Activated CD8-positive, alpha-beta memory T cell treated with anti-CD3 and anti-CD28 coated beads, Interleukin-2, amount 10 ng/mL, durations not matched to agents 7 days and 5 days (primary cell): ENCODE measurements at regions of chr2 and their contacts with region 1.

Region 1: GRCh38 chr2:45778720-45779171 is 127.3 kb downstream of the PRKCE start:
- DNase-seq: peak; percentile 74
- ATAC-seq: peak; percentile 86
- H3K4me3 Mint-ChIP-seq: no peak overlapping the region
- H3K27ac Mint-ChIP-seq: no peak overlapping the region
- H3K4me1 Mint-ChIP-seq: peaks cover 14% of the 10 kb centered on the region
- H3K27me3 Mint-ChIP-seq: no peaks in the 10 kb centered on the region

Region 2: GRCh38 chr2:45643543-45644542 is 134.9 kb before region 1 on chr2:
- CTCF ChIA-PET with region 1: interaction called, 59 read pairs
- DNase-seq: peak; percentile 73
- ATAC-seq: peak; percentile 99
- H3K4me3 Mint-ChIP-seq: peak overlapping the region; percentile 52
- H3K27ac Mint-ChIP-seq: no peak overlapping the region
- H3K4me1 Mint-ChIP-seq: peaks cover 18% of the 10 kb centered on the region
- H3K27me3 Mint-ChIP-seq: peaks cover 32% of the 10 kb centered on the region

Region 3: GRCh38 chr2:45650851-45651414 is 127.8 kb before region 1 on chr2:
- CTCF ChIA-PET with region 1: interaction called, 52 read pairs
- DNase-seq: peak; percentile 94
- ATAC-seq: peak; percentile 88
- H3K4me3 Mint-ChIP-seq: peak overlapping the region; percentile 90
- H3K27ac Mint-ChIP-seq: peak overlapping the region; percentile 94
- H3K4me1 Mint-ChIP-seq: peaks cover 31% of the 10 kb centered on the region
- H3K27me3 Mint-ChIP-seq: peaks cover 13% of the 10 kb centered on the region

Region 4: GRCh38 chr2:45789961-45790723 is 11.4 kb after region 1 on chr2:
- CTCF ChIA-PET with region 1: interaction called, 31 read pairs
- DNase-seq: no peak
- ATAC-seq: no peak
- H3K4me3 Mint-ChIP-seq: no peak overlapping the region
- H3K27ac Mint-ChIP-seq: no peak overlapping the region
- H3K4me1 Mint-ChIP-seq: peaks cover 3% of the 10 kb centered on the region
- H3K27me3 Mint-ChIP-seq: no peaks in the 10 kb centered on the region

Region 5: GRCh38 chr2:45843136-45843535 is 64.4 kb after region 1 on chr2:
- CTCF ChIA-PET with region 1: interaction called, 14 read pairs
- DNase-seq: peak; percentile 62
- ATAC-seq: peak; percentile 37
- H3K4me3 Mint-ChIP-seq: peak overlapping the region; percentile 10
- H3K27ac Mint-ChIP-seq: peak overlapping the region; percentile 87
- H3K4me1 Mint-ChIP-seq: peaks cover 69% of the 10 kb centered on the region
- H3K27me3 Mint-ChIP-seq: no peaks in the 10 kb centered on the region

Region 6: DNA sequence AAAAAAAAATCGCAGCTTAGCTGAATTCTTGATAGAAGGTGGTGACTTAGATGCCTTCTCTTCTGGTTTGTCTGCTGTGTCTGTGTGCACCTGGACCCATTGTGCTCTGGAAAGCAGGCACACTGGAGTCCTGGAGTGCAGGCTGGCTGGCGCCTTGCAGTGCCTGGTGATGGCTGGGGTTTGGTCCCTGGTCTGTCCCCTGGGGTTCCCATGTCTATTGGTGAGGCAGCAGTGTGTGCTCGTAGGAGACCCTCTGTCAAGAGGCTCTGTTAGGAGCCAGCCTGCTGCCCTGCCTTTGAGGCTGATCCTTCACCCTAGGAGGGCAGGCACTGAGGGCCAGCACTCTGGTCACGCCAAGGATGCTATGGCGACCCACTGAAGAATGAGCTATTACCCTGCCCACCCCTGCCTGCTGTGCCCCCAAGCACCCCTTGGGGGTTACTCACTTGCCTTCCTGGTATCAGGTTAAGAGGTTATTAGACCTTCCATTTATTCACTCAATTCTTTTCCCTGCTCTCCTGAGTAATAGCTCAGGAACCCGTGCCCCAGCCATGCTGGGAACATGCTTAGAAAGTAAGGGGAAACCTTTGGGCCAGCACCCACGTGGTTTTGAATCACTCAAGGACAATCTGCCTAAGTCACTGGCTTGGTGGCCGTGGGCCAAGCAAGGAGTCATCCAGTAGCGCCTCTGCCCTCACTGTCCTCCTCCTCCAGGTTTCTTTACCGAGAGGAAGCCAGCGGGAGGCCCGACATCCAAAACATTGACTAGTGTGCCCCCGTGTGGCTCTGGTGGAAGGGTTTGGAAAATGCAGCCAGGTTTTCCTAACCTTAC is 157.3 kb after region 1 on chr2:
- CTCF ChIA-PET with region 1: interaction called, 22 read pairs
- DNase-seq: peak; percentile 70
- ATAC-seq: peak; percentile 66
- H3K4me3 Mint-ChIP-seq: no peak overlapping the region
- H3K27ac Mint-ChIP-seq: peak overlapping the region; percentile 2
- H3K4me1 Mint-ChIP-seq: peaks cover 16% of the 10 kb centered on the region
- H3K27me3 Mint-ChIP-seq: no peaks in the 10 kb centered on the region